ENCODE measurements at regions of chr7 and their contacts with region 1.

Region 1: GRCh38 chr7:30625283-30625682 is 30.6 kb downstream of the GARS1 start:
- DNase-seq: no peak
- H3K4me3 ChIP-seq: no peak overlapping the region
- H3K27ac ChIP-seq: no peak overlapping the region
- H3K4me1 ChIP-seq: no peaks in the 10 kb centered on the region
- H3K27me3 ChIP-seq: no peaks in the 10 kb centered on the region
- CTCF ChIP-seq: peak in 1 of 3 experiments; percentile 10
- EP300 ChIP-seq: no peak
- POLR2A ChIP-seq: no peak

Region 2: GRCh38 chr7:30585675-30586074 is 39.6 kb before region 1 on chr7:
- intact Hi-C with region 1: no loop called
- DNase-seq: no peak
- H3K4me3 ChIP-seq: no peak overlapping the region
- H3K27ac ChIP-seq: no peak overlapping the region
- H3K4me1 ChIP-seq: peaks cover 0 to 13% (median 4%) of the 10 kb centered on the region in 4 donors
- H3K27me3 ChIP-seq: no peaks in the 10 kb centered on the region
- CTCF ChIP-seq: no peak
- EP300 ChIP-seq: no peak
- POLR2A ChIP-seq: no peak

Region 3: DNA sequence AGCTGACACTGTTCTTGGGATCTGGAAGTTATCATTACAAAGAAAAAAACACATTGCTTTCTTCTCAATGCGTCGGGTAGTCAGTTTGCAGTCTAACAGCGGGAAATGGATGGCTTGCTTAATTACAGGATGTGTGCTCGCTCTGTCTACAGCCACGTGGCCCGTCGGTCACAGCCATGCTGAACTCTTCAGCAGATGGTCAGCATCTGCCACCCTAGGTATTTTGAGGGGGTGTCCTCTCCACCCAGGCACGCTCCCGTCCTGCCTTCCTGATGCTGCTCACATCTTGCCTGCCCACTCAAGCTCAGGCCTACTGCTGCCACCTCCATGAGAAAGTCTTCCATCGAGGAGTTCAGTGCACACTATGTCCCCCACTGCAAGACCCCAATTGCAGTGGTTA is 106.3 kb after region 1 on chr7:
- intact Hi-C with region 1: loop called (anchors 10 kb)
- DNase-seq: no peak
- H3K4me3 ChIP-seq: no peak overlapping the region
- H3K27ac ChIP-seq: no peak overlapping the region
- H3K4me1 ChIP-seq: peaks cover 0 to 4% (median 0%) of the 10 kb centered on the region in 4 donors
- H3K27me3 ChIP-seq: peaks cover 0 to 6% (median 0%) of the 10 kb centered on the region in 4 donors
- CTCF ChIP-seq: no peak
- EP300 ChIP-seq: no peak
- POLR2A ChIP-seq: no peak

Measured in esophagus muscularis mucosa (tissue), 4 donors.